Caco-2 (cell line): ENCODE measurements at regions of chr16 and their contacts with region 1.

Region 1: GRCh38 chr16:25257504-25257955 is at the start of gene ZKSCAN2:
- DNase-seq: peak; percentile 92 to 93
- H3K4me3 ChIP-seq: peak within 1 kb of the TSS; percentile 85
- H3K4me3 Mint-ChIP-seq: peak within 1 kb of the TSS; percentile 94
- H3K27ac Mint-ChIP-seq: peak within 1 kb of the TSS; percentile 99
- H3K4me1 ChIP-seq: peaks cover 4% of the 10 kb centered on the region; the same call in 1 of the 2 replicates
- H3K4me1 Mint-ChIP-seq: peaks cover 12% of the 10 kb centered on the region
- H3K27me3 ChIP-seq: no peaks in the 10 kb centered on the region
- H3K27me3 Mint-ChIP-seq: no peaks in the 10 kb centered on the region
- CTCF ChIP-seq: no peak
- total RNA-seq, gene ZKSCAN2: 10.5 and 11.1 TPM in 2 replicates

Region 2: GRCh38 chr16:25066747-25067631 is 190.5 kb before region 1 on chr16:
- CTCF ChIA-PET with region 1: no interaction called
- POLR2A ChIA-PET with region 1: no interaction called
- intact Hi-C with region 1: no loop called
- DNase-seq: peak; percentile 80 to 86
- H3K4me3 ChIP-seq: peak overlapping the region; percentile 54
- H3K4me3 Mint-ChIP-seq: peak overlapping the region; percentile 96
- H3K27ac Mint-ChIP-seq: peak overlapping the region; percentile 91
- H3K4me1 ChIP-seq: peaks cover 24% of the 10 kb centered on the region
- H3K4me1 Mint-ChIP-seq: peaks cover 18% of the 10 kb centered on the region
- H3K27me3 ChIP-seq: no peaks in the 10 kb centered on the region
- H3K27me3 Mint-ChIP-seq: no peaks in the 10 kb centered on the region
- CTCF ChIP-seq: no peak

Region 3: DNA sequence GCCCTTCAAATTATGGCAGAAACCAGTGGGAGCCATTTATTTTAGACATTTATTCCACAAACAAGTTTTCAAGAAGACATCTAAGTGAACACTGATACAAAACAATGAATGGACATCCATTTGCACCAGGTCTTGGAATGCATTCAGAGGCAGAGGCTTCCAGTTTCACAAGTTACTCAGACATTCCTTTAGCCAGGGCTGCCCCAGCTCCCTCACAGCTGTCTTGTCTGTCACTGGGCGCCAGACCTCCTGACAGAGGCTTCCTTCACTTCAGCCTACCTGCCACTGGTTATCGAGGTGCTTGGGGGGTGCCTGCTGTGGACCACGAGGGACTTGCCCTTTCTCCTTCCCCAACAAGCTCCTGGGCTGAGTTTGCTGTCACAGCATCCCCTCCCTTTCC is 21.5 kb before region 1 on chr16:
- CTCF ChIA-PET with region 1: no interaction called
- POLR2A ChIA-PET with region 1: no interaction called
- intact Hi-C with region 1: loop called (anchors 2 kb)
- DNase-seq: no peak
- H3K4me3 ChIP-seq: no peak overlapping the region
- H3K4me3 Mint-ChIP-seq: no peak overlapping the region
- H3K27ac Mint-ChIP-seq: no peak overlapping the region
- H3K4me1 ChIP-seq: no peaks in the 10 kb centered on the region
- H3K4me1 Mint-ChIP-seq: no peaks in the 10 kb centered on the region
- H3K27me3 ChIP-seq: no peaks in the 10 kb centered on the region
- H3K27me3 Mint-ChIP-seq: peaks cover 2% of the 10 kb centered on the region
- CTCF ChIP-seq: no peak

Region 4: GRCh38 chr16:25366078-25366477 is 108.5 kb after region 1 on chr16:
- CTCF ChIA-PET with region 1: no interaction called
- POLR2A ChIA-PET with region 1: no interaction called
- intact Hi-C with region 1: no loop called
- DNase-seq: no peak
- H3K4me3 ChIP-seq: no peak overlapping the region
- H3K4me3 Mint-ChIP-seq: no peak overlapping the region
- H3K27ac Mint-ChIP-seq: no peak overlapping the region
- H3K4me1 ChIP-seq: peaks cover 14% of the 10 kb centered on the region
- H3K4me1 Mint-ChIP-seq: peaks cover 7% of the 10 kb centered on the region
- H3K27me3 ChIP-seq: no peaks in the 10 kb centered on the region
- H3K27me3 Mint-ChIP-seq: no peaks in the 10 kb centered on the region
- CTCF ChIP-seq: no peak